GM12878 (cell line): ENCODE measurements at regions of chr21 and their contacts with region 1.

Region 1: GRCh38 chr21:36028127-36029069 is 31.9 kb downstream of the SETD4 start:
- DNase-seq: peak; percentile 23
- ATAC-seq: peak; percentile 97
- H3K4me3 ChIP-seq: no peak overlapping the region
- H3K27ac ChIP-seq: no peak overlapping the region
- H3K4me1 ChIP-seq: peaks cover 5% of the 10 kb centered on the region
- H3K27me3 ChIP-seq: no peaks in the 10 kb centered on the region
- CTCF ChIP-seq: peak; percentile 94 to 98 (median 97)
- EP300 ChIP-seq: no peak
- POLR2A ChIP-seq: no peak
- RAD21 ChIP-seq: peak; percentile 95

Region 2: DNA sequence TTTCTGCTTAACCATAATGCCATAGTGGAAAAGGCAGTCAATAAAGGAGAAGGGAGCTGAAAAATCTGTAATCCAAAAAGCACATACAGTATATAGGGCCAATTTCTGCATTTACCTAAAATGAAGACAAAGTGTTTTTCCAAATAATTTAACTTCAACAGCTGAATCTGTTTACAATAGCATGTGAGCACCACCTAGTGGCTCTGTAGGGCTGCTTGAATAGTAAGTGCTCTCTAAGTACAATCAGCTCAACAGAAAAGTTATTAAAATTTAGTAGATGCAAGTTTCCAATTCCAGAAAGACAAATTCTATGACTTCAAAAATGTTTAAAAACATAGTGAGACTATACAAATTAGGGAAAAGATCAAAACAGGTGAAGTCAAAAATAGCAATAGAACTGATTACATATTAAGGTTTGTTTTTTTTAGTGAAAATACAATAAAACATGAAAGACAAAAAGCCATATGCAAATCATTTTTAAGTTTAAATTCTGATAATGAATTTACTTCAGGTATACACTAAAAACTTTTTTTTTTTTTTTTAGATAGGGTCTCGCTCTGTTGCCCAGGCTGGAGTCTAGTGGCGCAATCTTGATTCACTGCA is 188.1 kb before region 1 on chr21:
- CTCF ChIA-PET with region 1: interaction called, 16 read pairs
- POLR2A ChIA-PET with region 1: no interaction called
- RAD21 ChIA-PET with region 1: interaction called, 4 read pairs
- SMC1A ChIA-PET with region 1: interaction called, 4 read pairs
- in situ Hi-C with region 1: no loop called
- intact Hi-C with region 1: loop called (anchors 5 kb)
- DNase-seq: no peak
- ATAC-seq: peak; percentile 76
- H3K4me3 ChIP-seq: no peak overlapping the region
- H3K27ac ChIP-seq: no peak overlapping the region
- H3K4me1 ChIP-seq: no peaks in the 10 kb centered on the region
- H3K27me3 ChIP-seq: peaks cover 0 to 1% of the 10 kb centered on the region in 2 experiments; a peak in 1 of 4 replicates
- CTCF ChIP-seq: peak; percentile 73 to 76 (median 74)
- EP300 ChIP-seq: no peak
- POLR2A ChIP-seq: no peak
- RAD21 ChIP-seq: peak; percentile 87

Region 3: DNA sequence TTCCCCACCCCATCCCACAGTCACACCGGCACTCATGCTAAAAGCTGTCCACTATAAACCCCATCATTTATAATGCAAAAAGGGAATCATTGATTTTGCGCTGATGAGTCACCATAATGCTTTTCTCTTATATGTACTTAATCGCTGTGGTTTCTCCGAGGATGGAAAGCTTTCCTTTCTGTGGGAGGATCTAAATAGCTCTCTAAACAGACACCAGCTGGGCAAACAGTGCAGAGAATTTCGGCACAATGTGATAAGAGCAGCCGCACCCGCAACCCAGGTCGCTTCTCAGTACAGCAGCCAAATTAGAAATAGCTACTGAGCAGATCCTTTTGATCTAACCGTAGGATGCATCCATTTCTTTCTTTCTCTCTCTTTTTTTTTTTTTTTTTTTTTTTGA is 53.6 kb before region 1 on chr21:
- CTCF ChIA-PET with region 1: no interaction called
- POLR2A ChIA-PET with region 1: no interaction called
- RAD21 ChIA-PET with region 1: no interaction called
- SMC1A ChIA-PET with region 1: no interaction called
- in situ Hi-C with region 1: no loop called
- intact Hi-C with region 1: no loop called
- DNase-seq: no peak
- ATAC-seq: no peak
- H3K4me3 ChIP-seq: no peak overlapping the region
- H3K27ac ChIP-seq: no peak overlapping the region
- H3K4me1 ChIP-seq: no peaks in the 10 kb centered on the region
- H3K27me3 ChIP-seq: no peaks in the 10 kb centered on the region
- CTCF ChIP-seq: no peak
- EP300 ChIP-seq: no peak
- POLR2A ChIP-seq: no peak
- RAD21 ChIP-seq: no peak

Region 4: GRCh38 chr21:36038701-36039497 is 10.5 kb after region 1 on chr21:
- CTCF ChIA-PET with region 1: interaction called, 5 read pairs
- POLR2A ChIA-PET with region 1: no interaction called
- RAD21 ChIA-PET with region 1: no interaction called
- SMC1A ChIA-PET with region 1: interaction called, 11 read pairs
- in situ Hi-C with region 1: no loop called
- intact Hi-C with region 1: no loop called
- DNase-seq: no peak
- ATAC-seq: no peak
- H3K4me3 ChIP-seq: no peak overlapping the region
- H3K27ac ChIP-seq: no peak overlapping the region
- H3K4me1 ChIP-seq: no peaks in the 10 kb centered on the region
- H3K27me3 ChIP-seq: no peaks in the 10 kb centered on the region
- CTCF ChIP-seq: no peak
- EP300 ChIP-seq: no peak
- POLR2A ChIP-seq: no peak
- RAD21 ChIP-seq: no peak